HEK293T (cell line): ENCODE measurements at regions of chr9 and their contacts with region 1.

Region 1: DNA sequence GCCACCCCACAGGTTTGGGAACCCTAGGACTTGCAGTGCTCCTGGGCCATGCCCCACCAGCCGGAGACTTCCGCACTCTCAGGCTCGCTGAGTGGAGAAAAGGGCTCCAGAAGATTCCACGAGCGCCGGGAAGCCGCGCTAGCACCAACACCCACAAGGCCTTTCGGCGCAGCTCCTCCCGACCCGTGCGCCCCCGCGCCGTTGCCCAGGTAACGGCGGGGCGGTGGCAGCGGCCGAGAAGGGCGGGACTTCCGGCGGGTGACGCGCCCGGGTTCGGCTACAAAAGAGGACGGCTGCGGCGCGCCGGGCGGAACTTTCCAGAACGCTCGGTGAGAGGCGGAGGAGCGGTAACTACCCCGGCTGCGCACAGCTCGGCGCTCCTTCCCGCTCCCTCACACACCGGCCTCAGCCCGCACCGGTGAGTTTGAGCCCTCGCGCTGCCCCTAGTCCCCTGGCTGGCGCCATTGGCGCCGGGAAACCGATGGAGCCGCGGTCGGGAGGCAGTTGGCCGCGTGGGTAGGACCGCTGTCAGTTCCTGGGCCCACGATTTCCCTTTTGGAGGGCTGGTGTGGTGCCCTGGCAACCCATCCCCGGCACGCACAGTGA is at the start of gene DNAJA1:
- DNase-seq: peak; percentile 95

Region 2: GRCh38 chr9:33012328-33013069 is 12.6 kb before region 1 on chr9:
- CTCF ChIA-PET with region 1: no interaction called
- POLR2A ChIA-PET with region 1: interaction called, 10 read pairs
- DNase-seq: no peak

Region 3: GRCh38 chr9:33044127-33044673 is 19.1 kb after region 1 on chr9:
- CTCF ChIA-PET with region 1: no interaction called
- POLR2A ChIA-PET with region 1: interaction called, 16 read pairs
- DNase-seq: no peak

Region 4: GRCh38 chr9:33076358-33077004 is 51.4 kb after region 1 on chr9 and contains the start of gene SMU1:
- CTCF ChIA-PET with region 1: no interaction called
- POLR2A ChIA-PET with region 1: interaction called, 11 read pairs
- DNase-seq: peak; percentile 96